ENCODE measurements at regions of chr6 and their contacts with region 1.

Region 1: GRCh38 chr6:46993846-46994245 is 48.3 kb downstream of the ADGRF1 start:
- DNase-seq: no peak
- ATAC-seq: no peak
- H3K4me3 ChIP-seq: no peak overlapping the region
- H3K27ac ChIP-seq: no peak overlapping the region
- H3K4me1 ChIP-seq: no peaks in the 10 kb centered on the region
- H3K27me3 ChIP-seq: no peaks in the 10 kb centered on the region
- CTCF ChIP-seq: no peak

Region 2: DNA sequence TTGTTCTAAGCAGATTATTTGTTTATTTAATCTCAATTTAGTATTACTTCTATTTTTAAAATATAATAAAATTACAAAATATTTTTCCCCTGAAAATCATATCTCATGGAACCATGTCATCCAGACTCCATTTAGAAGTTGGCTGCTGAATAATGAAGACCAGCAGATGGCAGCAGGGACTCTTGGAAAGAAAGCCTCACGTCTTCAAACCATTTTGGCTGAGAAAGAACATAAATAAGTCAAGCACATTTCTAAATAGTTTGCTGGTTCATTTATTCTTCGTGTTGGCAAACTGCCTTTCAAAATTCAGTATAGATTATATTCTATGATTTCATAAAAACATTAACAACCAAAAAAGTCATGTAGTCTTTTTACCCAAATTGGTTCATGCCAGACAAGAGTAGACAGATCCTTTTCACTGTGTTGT is 574.3 kb before region 1 on chr6:
- intact Hi-C with region 1: loop called in 1 of 2 experiments (anchors 5 kb)
- DNase-seq: no peak
- ATAC-seq: peak; percentile 57 to 85 (median 70)
- H3K4me3 ChIP-seq: no peak overlapping the region
- H3K27ac ChIP-seq: no peak overlapping the region
- H3K4me1 ChIP-seq: peaks cover 11% of the 10 kb centered on the region
- H3K27me3 ChIP-seq: no peaks in the 10 kb centered on the region
- CTCF ChIP-seq: peak; percentile 82

Region 3: GRCh38 chr6:46848684-46849360 is 145.0 kb before region 1 on chr6:
- intact Hi-C with region 1: loop called in 1 of 2 experiments (anchors 1 kb)
- DNase-seq: peak; percentile 87 to 89
- ATAC-seq: peak; percentile 92 to 99 (median 96)
- H3K4me3 ChIP-seq: peak overlapping the region; percentile 15
- H3K27ac ChIP-seq: no peak overlapping the region
- H3K4me1 ChIP-seq: no peaks in the 10 kb centered on the region
- H3K27me3 ChIP-seq: no peaks in the 10 kb centered on the region
- CTCF ChIP-seq: peak; percentile 98

Region 4: GRCh38 chr6:46940433-46941226 is 53.2 kb before region 1 on chr6:
- intact Hi-C with region 1: no loop called
- DNase-seq: no peak
- ATAC-seq: no peak
- H3K4me3 ChIP-seq: no peak overlapping the region
- H3K27ac ChIP-seq: no peak overlapping the region
- H3K4me1 ChIP-seq: no peaks in the 10 kb centered on the region
- H3K27me3 ChIP-seq: peaks cover 0 to 10% (median 0%) of the 10 kb centered on the region in 3 donors
- CTCF ChIP-seq: no peak

Region 5: DNA sequence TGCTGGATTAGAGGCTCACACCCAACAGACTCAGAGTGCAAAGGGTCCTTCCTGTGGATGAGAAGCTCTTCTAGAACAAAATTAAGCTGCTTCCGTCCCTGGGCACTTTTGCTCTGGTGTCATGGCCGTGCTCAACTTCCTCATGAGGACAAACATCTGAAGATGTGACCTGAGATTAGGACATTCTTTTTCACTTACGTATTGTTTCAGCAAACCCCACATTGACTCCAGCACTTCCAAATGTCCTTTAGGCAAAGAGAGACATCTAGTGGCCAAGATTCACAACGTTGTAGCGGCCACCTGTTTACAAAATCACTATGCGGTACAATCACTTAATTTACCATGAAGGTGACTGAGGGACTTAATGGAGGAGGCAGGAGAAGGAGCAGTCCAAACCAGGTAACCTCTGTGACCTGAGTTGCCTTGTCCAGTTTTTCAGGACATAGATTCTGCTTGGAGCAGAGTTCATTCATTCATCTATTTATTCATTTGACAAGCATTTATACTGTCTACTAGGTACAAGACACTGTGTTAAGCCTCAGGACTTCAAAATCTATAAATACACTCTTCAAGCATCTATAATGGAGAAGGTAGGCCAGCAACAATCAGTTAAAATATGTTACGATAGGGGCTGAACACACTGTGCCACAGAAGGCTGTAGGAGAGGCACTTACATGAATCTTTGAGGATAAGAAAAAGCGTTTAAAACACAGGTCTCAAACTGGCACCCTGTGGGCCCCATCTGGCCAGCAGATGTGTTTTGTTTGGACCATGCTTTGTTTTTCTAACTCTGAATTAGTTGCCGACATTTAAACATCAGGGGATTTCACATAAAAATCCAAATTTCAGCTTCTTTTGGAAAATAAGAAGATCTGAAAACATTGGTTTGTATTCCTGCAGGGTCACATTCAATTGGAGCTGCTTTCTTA is 53.9 kb after region 1 on chr6:
- intact Hi-C with region 1: loop called in 1 of 2 experiments (anchors 5 kb)
- DNase-seq: no peak
- ATAC-seq: peak; percentile 81 to 90 (median 86)
- H3K4me3 ChIP-seq: no peak overlapping the region
- H3K27ac ChIP-seq: no peak overlapping the region
- H3K4me1 ChIP-seq: peaks cover 3% of the 10 kb centered on the region
- H3K27me3 ChIP-seq: no peaks in the 10 kb centered on the region
- CTCF ChIP-seq: peak; percentile 77